ENCODE measurements at regions of chr1 and their contacts with region 1.

Region 1: GRCh38 chr1:241611063-241611462 is 29.1 kb downstream of the CHML start:
- DNase-seq: peak; percentile 74
- H3K4me3 ChIP-seq: no peak overlapping the region
- H3K27ac ChIP-seq: no peak overlapping the region
- H3K4me1 ChIP-seq: peaks cover 44% of the 10 kb centered on the region
- H3K27me3 ChIP-seq: no peaks in the 10 kb centered on the region
- CTCF ChIP-seq: peak; percentile 38 to 47
- POLR2A ChIP-seq: no peak

Region 2: GRCh38 chr1:241531195-241532161 is 79.6 kb before region 1 on chr1:
- CTCF ChIA-PET with region 1: interaction called, 12 read pairs
- POLR2A ChIA-PET with region 1: no interaction called
- dilution Hi-C with region 1: no loop called
- intact Hi-C with region 1: loop called (anchors 1 kb)
- DNase-seq: peak; percentile 79
- H3K4me3 ChIP-seq: peak overlapping the region; percentile 35 to 93 (median 84)
- H3K27ac ChIP-seq: no peak overlapping the region
- H3K4me1 ChIP-seq: peaks cover 8% of the 10 kb centered on the region
- H3K27me3 ChIP-seq: peaks cover 22 to 57% of the 10 kb centered on the region in 2 experiments
- CTCF ChIP-seq: peak; percentile 31 to 34
- POLR2A ChIP-seq: no peak

Region 3: DNA sequence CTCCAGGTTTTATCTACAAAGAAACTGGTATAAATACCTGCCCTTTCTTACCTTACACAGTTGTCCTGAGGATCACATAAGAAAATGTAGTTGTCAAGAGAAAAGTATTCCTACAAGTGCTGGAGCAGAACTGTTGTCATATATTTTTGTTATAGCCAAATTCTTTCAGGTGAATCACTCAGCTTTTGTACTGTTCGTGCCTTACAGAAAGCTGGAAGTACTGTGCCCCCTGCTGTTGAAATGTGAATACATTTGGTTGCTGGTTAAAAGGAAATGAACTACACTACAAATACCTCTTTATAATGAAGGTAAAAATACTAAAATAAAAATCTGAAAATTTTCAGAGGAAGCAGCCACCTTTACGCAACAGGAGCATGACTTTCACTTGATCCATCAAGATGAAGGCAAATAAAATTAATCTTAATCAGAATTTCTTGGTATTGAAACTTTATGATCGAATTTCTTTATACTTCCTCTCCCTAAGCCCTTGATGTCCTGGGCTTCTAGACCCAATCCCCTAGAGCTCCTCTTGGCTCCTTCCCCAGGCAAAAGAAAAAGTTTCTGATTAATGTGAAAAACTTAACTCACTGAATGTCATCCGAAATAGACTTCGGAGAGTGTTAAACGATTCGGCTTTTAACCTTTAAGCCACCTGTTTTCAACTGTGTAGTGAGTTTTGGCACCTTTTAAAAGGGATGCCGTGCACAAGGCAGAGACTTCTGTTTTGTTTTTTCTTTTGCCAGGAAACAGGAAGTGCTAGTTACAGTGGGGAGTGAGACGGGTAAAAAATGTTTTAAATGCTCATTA is 16.6 kb after region 1 on chr1:
- CTCF ChIA-PET with region 1: interaction called, 106 read pairs
- POLR2A ChIA-PET with region 1: no interaction called
- dilution Hi-C with region 1: no loop called
- intact Hi-C with region 1: loop called (anchors 1 kb)
- DNase-seq: peak; percentile 72
- H3K4me3 ChIP-seq: no peak overlapping the region
- H3K27ac ChIP-seq: no peak overlapping the region
- H3K4me1 ChIP-seq: no peaks in the 10 kb centered on the region
- H3K27me3 ChIP-seq: no peaks in the 10 kb centered on the region
- CTCF ChIP-seq: peak; percentile 39 to 51
- POLR2A ChIP-seq: no peak

Region 4: DNA sequence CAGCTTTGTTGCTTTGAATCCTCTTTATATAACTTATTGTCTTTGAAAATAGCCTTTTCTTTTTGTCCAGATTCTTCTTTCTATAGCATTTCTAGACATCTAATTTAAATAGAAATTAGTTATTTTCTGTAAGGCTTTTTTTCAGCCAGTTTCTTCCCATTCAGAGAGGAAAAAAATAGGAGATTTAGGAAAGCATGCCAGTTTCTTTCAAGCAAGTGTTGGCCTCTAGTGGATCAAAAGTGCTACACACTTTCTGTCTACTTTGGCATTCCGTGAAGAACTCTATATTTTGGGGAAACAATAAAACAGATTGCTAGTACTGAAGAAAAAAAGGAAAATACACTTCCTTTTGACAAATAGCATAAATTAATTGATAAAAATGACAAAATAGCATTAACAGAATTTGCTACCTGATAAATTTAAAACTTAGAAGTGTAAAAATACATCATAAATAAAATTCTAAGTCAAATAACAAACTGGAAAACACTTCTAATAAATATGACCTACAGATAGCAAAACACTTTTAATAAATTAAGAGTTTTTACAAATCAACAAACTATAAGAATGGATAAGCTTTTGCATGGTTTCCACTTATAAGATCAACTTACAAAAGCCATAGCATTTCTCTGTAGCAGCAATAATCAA is 223.8 kb after region 1 on chr1:
- CTCF ChIA-PET with region 1: interaction called, 11 read pairs
- POLR2A ChIA-PET with region 1: no interaction called
- dilution Hi-C with region 1: no loop called
- intact Hi-C with region 1: loop called (anchors 1 kb)
- DNase-seq: peak; percentile 44
- H3K4me3 ChIP-seq: no peak overlapping the region
- H3K27ac ChIP-seq: no peak overlapping the region
- H3K4me1 ChIP-seq: peaks cover 18% of the 10 kb centered on the region
- H3K27me3 ChIP-seq: peaks cover 4 to 8% of the 10 kb centered on the region in 2 experiments
- CTCF ChIP-seq: peak; percentile 36 to 54
- POLR2A ChIP-seq: no peak

Region 5: DNA sequence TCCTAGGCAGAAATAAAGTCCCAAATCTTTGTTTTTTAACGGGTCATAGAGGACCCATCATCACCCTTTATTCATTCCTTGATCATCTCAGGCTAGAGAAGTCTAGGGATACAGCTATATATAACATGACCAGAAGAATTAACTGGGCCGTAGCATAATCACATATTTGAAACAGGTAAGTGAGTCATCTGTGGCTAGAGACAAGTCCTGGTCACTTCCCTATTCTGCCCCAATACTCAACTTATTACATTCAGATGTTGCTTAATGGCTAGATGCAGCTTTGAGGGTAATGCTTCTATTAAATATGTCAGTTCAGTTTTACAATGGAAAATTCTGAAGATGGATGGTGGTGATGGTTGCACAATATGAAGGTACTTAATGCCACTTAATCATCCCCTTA is 283.9 kb after region 1 on chr1:
- CTCF ChIA-PET with region 1: interaction called, 18 read pairs
- POLR2A ChIA-PET with region 1: no interaction called
- dilution Hi-C with region 1: no loop called
- intact Hi-C with region 1: loop called (anchors 1 kb)
- DNase-seq: no peak
- H3K4me3 ChIP-seq: no peak overlapping the region
- H3K27ac ChIP-seq: no peak overlapping the region
- H3K4me1 ChIP-seq: peaks cover 3% of the 10 kb centered on the region
- H3K27me3 ChIP-seq: no peaks in the 10 kb centered on the region
- CTCF ChIP-seq: no peak
- POLR2A ChIP-seq: no peak

Region 6: DNA sequence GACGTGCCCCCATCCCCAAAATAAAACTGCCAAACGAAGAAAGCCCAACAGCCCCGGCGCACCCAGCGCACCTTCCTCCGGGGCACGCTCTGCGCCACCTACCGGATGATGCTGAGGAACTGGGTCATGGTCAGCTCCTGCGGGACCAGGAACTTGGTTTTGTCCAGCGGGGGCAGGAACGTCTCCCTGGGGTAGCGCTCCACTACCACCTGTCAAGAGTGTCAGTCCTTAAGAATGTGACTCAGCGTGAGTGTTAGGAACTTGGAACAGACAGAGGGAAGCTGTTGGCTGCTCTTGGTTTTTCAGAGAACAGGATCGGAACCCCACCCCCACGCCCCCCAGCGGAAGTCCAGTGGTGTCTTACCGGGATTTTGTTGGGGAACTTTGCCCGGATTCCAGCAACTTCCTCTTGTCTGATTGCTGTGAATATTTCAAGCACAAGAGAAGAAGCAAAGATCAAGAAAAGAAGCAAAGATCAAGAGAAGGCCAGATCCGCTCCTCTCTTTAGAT is 387.4 kb after region 1 on chr1:
- CTCF ChIA-PET with region 1: interaction called, 26 read pairs
- POLR2A ChIA-PET with region 1: no interaction called
- dilution Hi-C with region 1: no loop called
- intact Hi-C with region 1: loop called (anchors 1 kb)
- DNase-seq: peak; percentile 48
- H3K4me3 ChIP-seq: peak overlapping the region in 2 of 3 experiments; percentile 22 to 53
- H3K27ac ChIP-seq: no peak overlapping the region
- H3K4me1 ChIP-seq: peaks cover 4% of the 10 kb centered on the region
- H3K27me3 ChIP-seq: no peaks in the 10 kb centered on the region
- CTCF ChIP-seq: peak; percentile 58 to 81
- POLR2A ChIP-seq: no peak